MCF 10A (cell line): ENCODE measurements at regions of chr17 and their contacts with region 1.

Region 1: GRCh38 chr17:59707114-59707970 is at the starts of genes PTRH2 and VMP1:
- DNase-seq: peak; percentile 99
- H3K4me3 Mint-ChIP-seq: peak within 1 kb of the TSS; percentile 94
- H3K27ac Mint-ChIP-seq: peak within 1 kb of the TSS; percentile 99
- H3K4me1 Mint-ChIP-seq: peaks cover 21% of the 10 kb centered on the region
- H3K27me3 Mint-ChIP-seq: no peaks in the 10 kb centered on the region
- CTCF ChIP-seq: no peak
- total RNA-seq, gene PTRH2: 47.5 and 51.7 TPM in 2 replicates
- total RNA-seq, gene VMP1: 205 and 228 TPM in 2 replicates

Region 2: DNA sequence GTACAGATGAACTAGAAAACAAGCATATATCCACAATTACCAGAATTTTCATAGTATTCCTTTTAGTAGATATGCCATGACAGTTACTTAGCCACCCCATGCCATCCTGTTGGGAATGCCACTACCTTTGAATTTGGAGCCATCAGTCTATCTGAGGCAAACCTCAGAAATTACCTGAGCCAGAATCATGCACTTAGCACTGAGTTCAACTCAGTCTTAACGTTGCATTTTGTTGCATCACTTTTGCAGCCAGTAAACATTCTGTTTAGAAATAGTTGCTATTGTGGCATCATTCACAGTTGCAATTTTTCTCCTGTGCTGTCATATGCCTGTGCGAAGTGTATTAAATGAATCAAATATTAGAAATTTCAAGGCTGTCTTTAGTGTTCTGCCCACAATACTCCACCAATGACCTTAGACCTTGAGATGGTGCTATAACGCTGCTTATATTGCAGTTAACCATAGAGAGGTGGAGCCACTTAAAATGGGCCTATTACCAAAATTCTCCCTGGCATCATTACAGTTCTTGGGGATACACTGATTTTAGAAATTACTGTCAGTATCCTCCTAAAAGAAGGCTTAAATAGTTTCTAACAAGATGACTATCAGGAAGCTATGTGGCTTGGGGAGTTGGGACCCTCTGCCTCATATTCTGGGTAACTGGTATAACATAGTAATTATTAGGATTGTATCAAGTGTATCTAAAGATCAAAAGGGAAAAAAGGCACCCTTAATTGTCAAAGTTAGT is 11.2 kb before region 1 on chr17:
- CTCF ChIA-PET with region 1: no interaction called
- POLR2A ChIA-PET with region 1: interaction called, 11 read pairs
- intact Hi-C with region 1: no loop called
- DNase-seq: no peak
- H3K4me3 Mint-ChIP-seq: no peak overlapping the region
- H3K27ac Mint-ChIP-seq: peak overlapping the region; percentile 31
- H3K4me1 Mint-ChIP-seq: peaks cover 37% of the 10 kb centered on the region
- H3K27me3 Mint-ChIP-seq: no peaks in the 10 kb centered on the region
- CTCF ChIP-seq: no peak

Region 3: DNA sequence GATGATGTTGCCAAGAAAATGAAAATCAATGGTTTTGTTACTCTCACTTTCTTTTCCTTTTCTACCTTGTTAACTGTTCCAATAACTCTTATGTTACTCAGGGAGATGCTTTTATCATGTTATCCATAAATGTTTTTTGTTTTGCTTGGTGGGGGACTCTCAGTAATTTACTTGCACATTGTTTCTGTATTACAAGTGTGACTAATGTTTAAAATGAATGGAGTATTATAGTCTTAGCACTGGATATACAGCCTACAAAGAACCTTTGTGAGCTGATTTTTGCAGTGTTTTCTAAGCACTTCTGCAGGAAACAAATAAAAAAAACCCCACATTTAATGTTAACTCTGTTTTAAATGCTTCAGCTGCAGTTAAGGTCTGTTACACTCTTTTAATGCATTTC is 12.2 kb after region 1 on chr17:
- CTCF ChIA-PET with region 1: interaction called, 3 read pairs
- POLR2A ChIA-PET with region 1: interaction called, 78 read pairs
- intact Hi-C with region 1: no loop called
- DNase-seq: no peak
- H3K4me3 Mint-ChIP-seq: no peak overlapping the region
- H3K27ac Mint-ChIP-seq: no peak overlapping the region
- H3K4me1 Mint-ChIP-seq: peaks cover 10% of the 10 kb centered on the region
- H3K27me3 Mint-ChIP-seq: no peaks in the 10 kb centered on the region
- CTCF ChIP-seq: no peak

Region 4: DNA sequence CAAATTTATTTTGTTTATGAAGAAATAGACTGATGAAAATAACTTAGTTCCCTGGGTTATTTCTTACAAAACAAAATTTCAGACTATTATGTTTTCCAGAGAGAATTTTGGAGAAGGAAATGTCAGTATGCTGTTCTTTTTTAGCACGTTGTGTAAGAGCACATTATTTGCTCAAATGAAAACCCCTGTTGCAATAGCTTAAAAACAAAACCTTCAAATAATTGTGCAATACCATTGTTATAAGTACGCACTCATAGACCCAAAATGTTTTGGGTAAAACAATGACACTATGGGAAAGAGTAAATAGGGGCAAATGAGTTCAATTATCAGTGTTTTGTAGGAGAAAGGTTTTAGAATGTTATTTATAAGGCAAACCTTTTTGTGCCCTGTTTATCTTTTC is 18.3 kb after region 1 on chr17:
- CTCF ChIA-PET with region 1: interaction called, 3 read pairs
- POLR2A ChIA-PET with region 1: interaction called, 78 read pairs
- intact Hi-C with region 1: no loop called
- DNase-seq: peak; percentile 60
- H3K4me3 Mint-ChIP-seq: peak overlapping the region; percentile 19
- H3K27ac Mint-ChIP-seq: peak overlapping the region; percentile 86
- H3K4me1 Mint-ChIP-seq: peaks cover 15% of the 10 kb centered on the region
- H3K27me3 Mint-ChIP-seq: no peaks in the 10 kb centered on the region
- CTCF ChIP-seq: no peak

Region 5: GRCh38 chr17:59853168-59853918 is 146.0 kb after region 1 on chr17:
- CTCF ChIA-PET with region 1: no interaction called
- POLR2A ChIA-PET with region 1: no interaction called
- intact Hi-C with region 1: loop called (anchors 5 kb)
- DNase-seq: peak; percentile 90
- H3K4me3 Mint-ChIP-seq: peak overlapping the region; percentile 47
- H3K27ac Mint-ChIP-seq: peak overlapping the region; percentile 96
- H3K4me1 Mint-ChIP-seq: peaks cover 23% of the 10 kb centered on the region
- H3K27me3 Mint-ChIP-seq: no peaks in the 10 kb centered on the region
- CTCF ChIP-seq: peak; percentile 24